Activated B cell treated with CpG ODN at 0.5 μM for 24 hours (primary cell): ENCODE measurements at regions of chr2 and their contacts with region 1.

Region 1: GRCh38 chr2:75403991-75404428 is 156.7 kb downstream of the EVA1A start:
- DNase-seq: no peak
- ATAC-seq: peak; percentile 90
- H3K4me3 Mint-ChIP-seq: no peak overlapping the region
- H3K27ac Mint-ChIP-seq: peak overlapping the region; percentile 20
- H3K4me1 Mint-ChIP-seq: peaks cover 22% of the 10 kb centered on the region
- H3K27me3 Mint-ChIP-seq: no peaks in the 10 kb centered on the region
- CTCF ChIP-seq: peak; percentile 51

Region 2: GRCh38 chr2:74887445-74887951 is 516.5 kb before region 1 on chr2:
- CTCF ChIA-PET with region 1: no interaction called
- POLR2A ChIA-PET with region 1: no interaction called
- intact Hi-C with region 1: no loop called
- DNase-seq: no peak
- ATAC-seq: no peak
- H3K4me3 Mint-ChIP-seq: no peak overlapping the region
- H3K27ac Mint-ChIP-seq: no peak overlapping the region
- H3K4me1 Mint-ChIP-seq: no peaks in the 10 kb centered on the region
- H3K27me3 Mint-ChIP-seq: no peaks in the 10 kb centered on the region
- CTCF ChIP-seq: no peak

Region 3: GRCh38 chr2:74919827-74920226 is 484.2 kb before region 1 on chr2:
- CTCF ChIA-PET with region 1: interaction called, 12 read pairs
- POLR2A ChIA-PET with region 1: no interaction called
- intact Hi-C with region 1: loop called (anchors 1 kb)
- DNase-seq: peak; percentile 72
- ATAC-seq: peak; percentile 88
- H3K4me3 Mint-ChIP-seq: peak overlapping the region; percentile 42
- H3K27ac Mint-ChIP-seq: no peak overlapping the region
- H3K4me1 Mint-ChIP-seq: peaks cover 14% of the 10 kb centered on the region
- H3K27me3 Mint-ChIP-seq: peaks cover 10% of the 10 kb centered on the region
- CTCF ChIP-seq: peak; percentile 57

Region 4: DNA sequence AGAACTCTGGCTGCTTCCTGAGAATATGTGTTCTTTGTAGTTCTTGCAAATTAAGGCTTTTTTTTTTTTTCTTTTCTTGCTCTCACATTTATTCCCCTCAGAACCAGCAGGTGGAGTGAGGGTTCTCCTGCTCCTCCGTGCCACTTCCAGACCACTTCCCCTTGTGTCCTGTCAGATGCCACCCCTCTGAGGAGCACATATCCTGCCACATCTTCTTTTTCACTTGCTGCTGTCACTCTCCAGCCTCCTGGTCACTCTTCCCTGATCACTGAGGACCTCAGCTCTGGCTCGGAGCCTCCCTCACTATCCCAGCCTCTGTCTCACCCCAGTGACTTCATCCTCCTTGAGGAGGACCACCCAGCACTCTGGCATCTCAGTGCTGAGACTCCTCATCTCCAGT is 305.2 kb before region 1 on chr2:
- CTCF ChIA-PET with region 1: no interaction called
- POLR2A ChIA-PET with region 1: no interaction called
- intact Hi-C with region 1: loop called (anchors 1 kb)
- DNase-seq: no peak
- ATAC-seq: no peak
- H3K4me3 Mint-ChIP-seq: no peak overlapping the region
- H3K27ac Mint-ChIP-seq: no peak overlapping the region
- H3K4me1 Mint-ChIP-seq: no peaks in the 10 kb centered on the region
- H3K27me3 Mint-ChIP-seq: peaks cover 2% of the 10 kb centered on the region
- CTCF ChIP-seq: no peak

Region 5: DNA sequence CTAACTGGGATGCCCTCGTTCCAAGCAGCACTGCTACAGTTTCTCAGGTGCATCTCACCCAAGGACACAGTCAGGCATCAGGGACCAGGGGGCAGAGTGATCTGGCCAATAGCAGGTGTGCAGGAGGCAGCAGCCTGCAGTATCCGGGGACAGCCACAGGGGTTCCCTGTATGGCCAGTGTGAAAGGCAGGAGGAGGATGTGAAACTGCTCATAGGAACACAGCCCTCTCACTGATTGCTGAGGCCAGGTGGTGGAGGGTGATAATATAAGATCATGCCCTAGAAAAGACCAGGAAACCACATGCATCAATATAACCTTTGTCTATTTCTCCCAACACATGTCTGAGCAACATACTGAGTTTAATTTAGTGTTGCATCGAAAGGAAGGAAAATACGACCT is 92.0 kb before region 1 on chr2:
- CTCF ChIA-PET with region 1: no interaction called
- POLR2A ChIA-PET with region 1: interaction called, 3 read pairs
- intact Hi-C with region 1: loop called (anchors 1 kb)
- DNase-seq: peak; percentile 38
- ATAC-seq: peak; percentile 100
- H3K4me3 Mint-ChIP-seq: no peak overlapping the region
- H3K27ac Mint-ChIP-seq: peak overlapping the region; percentile 3
- H3K4me1 Mint-ChIP-seq: peaks cover 17% of the 10 kb centered on the region
- H3K27me3 Mint-ChIP-seq: no peaks in the 10 kb centered on the region
- CTCF ChIP-seq: no peak

Region 6: GRCh38 chr2:75432761-75433361 is 28.9 kb after region 1 on chr2:
- CTCF ChIA-PET with region 1: interaction called, 3 read pairs
- POLR2A ChIA-PET with region 1: interaction called, 11 read pairs
- intact Hi-C with region 1: loop called (anchors 1 kb)
- DNase-seq: peak; percentile 24
- ATAC-seq: peak; percentile 69
- H3K4me3 Mint-ChIP-seq: peak overlapping the region; percentile 60
- H3K27ac Mint-ChIP-seq: peak overlapping the region; percentile 83
- H3K4me1 Mint-ChIP-seq: peaks cover 57% of the 10 kb centered on the region
- H3K27me3 Mint-ChIP-seq: no peaks in the 10 kb centered on the region
- CTCF ChIP-seq: no peak

Region 7: DNA sequence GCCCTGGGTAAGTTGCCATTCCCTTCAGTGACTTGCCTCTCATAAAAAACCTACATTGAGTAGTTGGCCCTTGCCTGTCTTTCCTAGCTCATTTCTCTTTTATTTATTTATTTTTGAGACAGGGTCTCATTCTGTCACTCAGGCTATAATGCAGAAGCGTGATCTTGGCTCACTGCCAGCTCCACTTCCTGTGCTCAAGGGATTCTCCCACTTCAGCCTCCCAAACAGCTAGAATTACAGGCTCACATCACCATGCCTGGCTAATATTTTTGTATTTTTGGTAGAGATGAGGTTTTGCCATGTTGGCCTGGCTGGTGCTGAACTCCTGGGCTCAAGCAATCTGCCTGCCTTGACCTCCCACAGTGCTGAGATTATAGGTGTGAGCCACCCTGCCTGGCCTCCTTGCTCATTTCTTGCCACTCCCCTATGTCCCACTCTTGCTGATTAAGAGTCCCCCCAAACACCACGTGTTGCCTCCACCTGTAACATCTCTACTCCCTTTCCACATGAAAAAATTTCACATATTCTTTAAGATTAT is 144.1 kb after region 1 on chr2:
- CTCF ChIA-PET with region 1: no interaction called
- POLR2A ChIA-PET with region 1: no interaction called
- intact Hi-C with region 1: no loop called
- DNase-seq: no peak
- ATAC-seq: no peak
- H3K4me3 Mint-ChIP-seq: no peak overlapping the region
- H3K27ac Mint-ChIP-seq: no peak overlapping the region
- H3K4me1 Mint-ChIP-seq: no peaks in the 10 kb centered on the region
- H3K27me3 Mint-ChIP-seq: peaks cover 22% of the 10 kb centered on the region
- CTCF ChIP-seq: no peak

Region 8: GRCh38 chr2:75608684-75609333 is 204.8 kb after region 1 on chr2:
- CTCF ChIA-PET with region 1: no interaction called
- POLR2A ChIA-PET with region 1: no interaction called
- intact Hi-C with region 1: loop called (anchors 1 kb)
- DNase-seq: peak; percentile 50
- ATAC-seq: peak; percentile 78
- H3K4me3 Mint-ChIP-seq: no peak overlapping the region
- H3K27ac Mint-ChIP-seq: no peak overlapping the region
- H3K4me1 Mint-ChIP-seq: no peaks in the 10 kb centered on the region
- H3K27me3 Mint-ChIP-seq: peaks cover 59% of the 10 kb centered on the region
- CTCF ChIP-seq: peak; percentile 72